ENCODE measurements at regions of chr5 and their contacts with region 1.

Region 1: GRCh38 chr5:54769071-54769470 is 216.3 kb downstream of the ESM1 start:
- DNase-seq: no peak
- ATAC-seq: peak; percentile 86
- H3K4me3 Mint-ChIP-seq: no peak overlapping the region
- H3K27ac Mint-ChIP-seq: no peak overlapping the region
- H3K4me1 Mint-ChIP-seq: peaks cover 2% of the 10 kb centered on the region; the same call in 1 of the 2 replicates
- H3K27me3 Mint-ChIP-seq: no peaks in the 10 kb centered on the region
- CTCF ChIP-seq: no peak

Region 2: GRCh38 chr5:54517174-54518092 is 251.6 kb before region 1 on chr5 and contains the start of gene SNX18:
- CTCF ChIA-PET with region 1: interaction called, 14 read pairs
- POLR2A ChIA-PET with region 1: no interaction called
- DNase-seq: peak; percentile 88
- ATAC-seq: peak; percentile 62
- H3K4me3 Mint-ChIP-seq: peak within 1 kb of the TSS; percentile 70
- H3K27ac Mint-ChIP-seq: no peak within 1 kb of the TSS
- H3K4me1 Mint-ChIP-seq: peaks cover 34% of the 10 kb centered on the region
- H3K27me3 Mint-ChIP-seq: peaks cover 14% of the 10 kb centered on the region
- CTCF ChIP-seq: peak; percentile 85
- total RNA-seq, gene SNX18: 20.3 to 24.6 TPM (median 23.6 TPM) in 3 replicates

Region 3: GRCh38 chr5:54792611-54793404 is 23.7 kb after region 1 on chr5:
- CTCF ChIA-PET with region 1: no interaction called
- POLR2A ChIA-PET with region 1: no interaction called
- DNase-seq: no peak
- ATAC-seq: no peak
- H3K4me3 Mint-ChIP-seq: no peak overlapping the region
- H3K27ac Mint-ChIP-seq: no peak overlapping the region
- H3K4me1 Mint-ChIP-seq: no peaks in the 10 kb centered on the region
- H3K27me3 Mint-ChIP-seq: no peaks in the 10 kb centered on the region
- CTCF ChIP-seq: no peak

Region 4: GRCh38 chr5:54803471-54804011 is 34.5 kb after region 1 on chr5:
- CTCF ChIA-PET with region 1: no interaction called
- POLR2A ChIA-PET with region 1: no interaction called
- DNase-seq: no peak
- ATAC-seq: no peak
- H3K4me3 Mint-ChIP-seq: no peak overlapping the region
- H3K27ac Mint-ChIP-seq: no peak overlapping the region
- H3K4me1 Mint-ChIP-seq: peaks cover 6% of the 10 kb centered on the region
- H3K27me3 Mint-ChIP-seq: peaks cover 3% of the 10 kb centered on the region; the same call in 1 of the 2 replicates
- CTCF ChIP-seq: no peak

Measured in WTC11 (cell line).